Right ventricle myocardium inferior (tissue), 1 donor: ENCODE measurements at regions of chr1 and their contacts with region 1.

Region 1: GRCh38 chr1:226062558-226063223 is at the start of gene H3-3A:
- DNase-seq: peak; percentile 100
- ATAC-seq: peak; percentile 94
- total RNA-seq, gene H3-3A: 348 TPM

Region 2: DNA sequence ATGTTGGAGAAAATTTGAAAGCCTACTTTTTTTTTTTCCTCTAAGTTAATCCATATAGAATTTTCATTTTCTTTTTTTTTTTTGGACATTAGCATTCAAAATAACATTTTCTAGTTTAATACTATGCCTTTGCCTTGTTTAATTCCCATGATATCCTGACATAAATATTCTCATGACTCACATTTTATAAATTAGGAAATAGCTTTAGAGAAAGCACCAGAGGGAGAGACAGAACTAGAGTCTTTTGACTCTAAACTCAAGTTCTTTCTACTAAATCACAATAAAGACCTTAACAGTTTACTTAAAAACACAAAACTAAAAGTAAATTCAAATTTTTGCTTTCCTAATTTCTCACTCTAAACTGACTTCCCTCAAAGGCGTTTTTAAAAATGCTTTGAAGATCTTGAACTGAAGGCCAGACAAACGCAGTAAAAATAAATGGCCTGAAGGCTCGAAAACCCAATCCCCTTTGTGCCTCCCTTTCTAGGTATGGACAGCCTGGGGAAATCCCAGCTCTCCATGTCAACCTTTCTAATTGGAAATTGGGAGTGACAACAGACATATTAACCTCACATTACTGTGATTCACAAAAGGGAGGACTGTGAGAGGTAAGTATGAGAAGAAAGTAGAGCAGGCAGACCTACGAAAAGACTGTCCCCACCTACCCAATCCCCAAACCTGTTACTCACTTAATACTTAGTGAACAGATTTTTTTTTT is 514.4 kb before region 1 on chr1:
- intact Hi-C with region 1: no loop called
- DNase-seq: no peak
- ATAC-seq: no peak

Region 3: GRCh38 chr1:225817611-225818061 is 245.1 kb before region 1 on chr1:
- intact Hi-C with region 1: no loop called
- DNase-seq: peak; percentile 85
- ATAC-seq: peak; percentile 42

Region 4: DNA sequence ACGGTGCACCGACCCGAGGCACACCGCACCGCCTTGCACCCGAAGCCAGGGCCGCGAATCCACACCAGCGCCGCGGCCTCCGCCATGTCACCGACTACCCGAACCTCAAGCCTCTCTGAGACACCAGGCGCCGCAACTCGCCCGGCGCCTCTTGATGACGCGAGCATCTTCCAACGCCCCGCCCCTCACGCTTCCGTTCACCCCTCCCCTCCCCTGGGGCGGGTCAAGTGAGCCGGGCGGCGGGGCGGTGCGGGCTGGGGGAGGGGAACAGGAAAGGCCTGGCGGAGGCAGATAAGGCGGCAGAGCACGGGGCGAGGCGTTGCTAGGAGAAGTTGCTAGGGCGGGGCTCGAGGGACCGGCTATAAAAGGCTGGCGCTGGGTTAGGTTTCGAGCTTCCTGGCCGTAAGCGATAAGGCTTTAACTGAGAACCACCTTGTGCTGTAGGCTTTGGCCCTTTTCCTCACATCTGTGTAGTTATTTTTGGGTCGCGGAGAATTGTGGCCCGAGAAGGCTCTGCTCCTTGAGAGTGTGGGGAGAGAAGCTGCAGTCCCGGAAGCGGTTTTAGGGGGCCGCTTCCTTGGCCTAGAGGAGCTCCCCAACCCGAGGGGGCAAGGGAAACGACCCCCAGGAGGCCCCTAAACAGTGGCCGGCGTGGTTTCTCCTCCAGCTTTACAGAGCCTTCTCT is 63.3 kb before region 1 on chr1 and contains the start of gene SDE2:
- intact Hi-C with region 1: loop called (anchors 1 kb)
- DNase-seq: peak; percentile 100
- ATAC-seq: peak; percentile 99
- total RNA-seq, gene SDE2: 11.7 TPM

Region 5: GRCh38 chr1:226083302-226084101 is 20.8 kb after region 1 on chr1:
- intact Hi-C with region 1: no loop called
- DNase-seq: peak; percentile 96
- ATAC-seq: peak; percentile 97

Region 6: DNA sequence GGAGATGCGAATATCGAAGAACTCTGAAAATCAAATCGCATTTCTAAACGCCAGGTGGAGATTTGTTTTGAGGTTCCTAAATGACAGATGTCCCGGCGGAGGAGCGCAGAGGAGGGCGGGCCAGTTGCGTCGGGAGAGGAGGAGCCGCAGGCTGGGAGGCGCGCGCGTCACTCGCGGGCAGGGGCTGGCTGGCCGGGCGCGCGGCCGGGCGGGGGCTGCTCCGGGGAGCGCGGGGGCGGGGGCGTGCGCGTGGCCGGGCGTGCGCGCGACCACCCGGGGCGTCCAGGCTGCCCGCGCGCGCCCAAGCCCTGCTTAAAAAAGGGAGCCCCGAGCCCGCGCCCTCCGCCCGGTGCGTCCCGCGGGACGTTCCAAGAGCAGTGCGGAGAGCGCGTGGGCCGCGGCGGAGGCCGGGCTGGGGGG is 47.1 kb after region 1 on chr1:
- intact Hi-C with region 1: loop called (anchors 1 kb)
- DNase-seq: peak; percentile 95
- ATAC-seq: peak; percentile 91

Region 7: GRCh38 chr1:226121587-226122400 is 59.1 kb after region 1 on chr1:
- intact Hi-C with region 1: loop called (anchors 1 kb)
- DNase-seq: peak; percentile 85
- ATAC-seq: peak; percentile 82

Region 8: GRCh38 chr1:226186124-226187018 is 123.7 kb after region 1 on chr1 and contains the start of gene ACBD3:
- intact Hi-C with region 1: loop called (anchors 5 kb)
- DNase-seq: peak; percentile 93
- ATAC-seq: peak; percentile 96
- total RNA-seq, gene ACBD3: 27.4 TPM